Activated CD8-positive, alpha-beta memory T cell treated with anti-CD3 and anti-CD28 coated beads, Interleukin-2, amount 10 ng/mL, durations not matched to agents 7 days and 5 days (primary cell): ENCODE measurements at regions of chr9 and their contacts with region 1.

Region 1: DNA sequence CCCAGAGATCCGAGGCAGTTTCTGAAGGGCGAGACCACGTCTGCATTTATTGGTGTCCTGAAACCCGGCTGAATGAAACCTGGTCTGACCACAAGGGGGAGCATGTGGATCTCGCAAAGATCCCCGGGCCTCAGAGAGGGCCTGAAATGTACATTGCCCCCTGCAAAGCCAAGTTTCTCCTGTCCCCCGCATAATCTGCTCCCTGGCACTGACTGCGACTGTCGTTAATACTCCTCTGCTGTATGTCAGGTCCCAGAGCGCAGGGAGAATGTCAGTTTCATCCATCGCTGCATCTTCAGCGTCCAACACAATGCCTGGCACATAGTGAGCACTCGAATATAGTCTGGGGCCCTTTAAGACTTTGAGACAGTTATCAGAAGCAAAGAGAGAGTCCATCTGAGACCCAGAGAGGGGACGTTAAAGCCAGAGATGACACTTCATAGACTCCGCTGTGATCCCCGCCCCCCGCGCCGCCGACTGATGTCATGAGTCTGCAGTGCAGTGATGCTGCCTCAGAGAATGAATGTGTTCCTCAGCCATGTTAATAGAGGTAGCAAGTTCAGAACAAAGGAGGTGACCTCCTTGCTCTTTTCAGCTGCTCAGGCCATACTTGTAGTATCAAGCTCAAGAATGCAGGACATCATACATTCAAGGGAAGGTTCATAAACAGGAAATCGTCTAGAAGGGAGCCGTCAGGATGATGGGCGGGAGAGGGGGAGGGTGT is 74.5 kb upstream of the BARHL1 start:
- DNase-seq: peak; percentile 78
- ATAC-seq: peak; percentile 75
- H3K4me3 Mint-ChIP-seq: no peak overlapping the region
- H3K27ac Mint-ChIP-seq: no peak overlapping the region
- H3K4me1 Mint-ChIP-seq: peaks cover 13% of the 10 kb centered on the region
- H3K27me3 Mint-ChIP-seq: peaks cover 30% of the 10 kb centered on the region

Region 2: DNA sequence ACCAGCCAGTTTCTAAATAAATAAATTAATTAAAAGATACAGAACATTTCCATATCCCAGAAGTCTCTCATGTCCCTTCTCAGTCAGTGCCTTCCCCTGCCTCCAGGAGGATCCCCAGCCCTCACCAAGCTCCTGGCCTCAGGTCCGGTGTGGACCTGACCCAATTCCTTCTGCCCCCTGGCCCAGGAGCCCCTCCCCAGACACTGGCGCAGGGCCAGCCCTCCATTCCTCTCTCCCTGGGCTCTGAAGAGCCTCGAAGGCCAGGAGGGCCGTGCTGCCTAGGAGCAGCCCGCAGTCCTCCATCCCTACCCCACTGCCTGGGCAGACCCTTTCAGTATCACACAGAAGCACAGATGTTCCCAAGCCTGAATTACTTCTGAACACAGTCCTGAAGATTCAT is 12.7 kb after region 1 on chr9:
- CTCF ChIA-PET with region 1: no interaction called
- DNase-seq: no peak
- ATAC-seq: no peak
- H3K4me3 Mint-ChIP-seq: no peak overlapping the region
- H3K27ac Mint-ChIP-seq: no peak overlapping the region
- H3K4me1 Mint-ChIP-seq: peaks cover 2% of the 10 kb centered on the region
- H3K27me3 Mint-ChIP-seq: peaks cover 20% of the 10 kb centered on the region

Region 3: DNA sequence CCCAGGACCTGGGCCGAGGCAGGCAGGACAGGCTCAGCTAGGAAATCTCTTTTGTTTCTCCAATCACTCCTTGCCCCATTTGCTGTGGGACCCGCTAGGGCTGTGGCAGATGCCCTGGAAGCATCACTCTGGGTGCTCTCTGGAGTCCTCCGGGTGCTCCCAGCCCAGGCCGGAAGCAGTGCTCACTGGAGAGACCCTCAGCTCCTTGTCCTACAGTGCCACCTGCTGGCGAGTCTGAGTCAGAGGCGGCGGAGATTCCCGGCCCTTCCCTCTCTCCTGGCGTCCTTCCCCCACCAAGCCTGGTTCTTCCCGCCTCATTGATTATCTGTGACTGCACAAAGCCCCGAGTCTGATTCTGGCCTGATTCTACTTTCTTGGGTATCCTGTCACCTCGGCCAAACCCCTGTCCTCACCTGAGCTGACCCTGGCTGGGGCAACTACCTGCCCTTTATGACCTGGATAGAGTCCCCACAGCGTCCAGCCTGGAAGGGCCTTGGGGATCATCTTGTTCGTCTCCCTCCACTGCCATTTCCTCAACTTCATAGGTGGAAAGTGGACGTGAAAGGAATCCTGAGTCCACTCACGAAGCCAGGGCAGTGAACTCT is 67.2 kb after region 1 on chr9:
- CTCF ChIA-PET with region 1: interaction called, 17 read pairs
- DNase-seq: peak; percentile 74
- ATAC-seq: peak; percentile 75
- H3K4me3 Mint-ChIP-seq: no peak overlapping the region
- H3K27ac Mint-ChIP-seq: no peak overlapping the region
- H3K4me1 Mint-ChIP-seq: no peaks in the 10 kb centered on the region
- H3K27me3 Mint-ChIP-seq: peaks cover 56% of the 10 kb centered on the region